Naive thymus-derived CD8-positive, alpha-beta T cell (primary cell): ENCODE measurements at regions of chrX and their contacts with region 1.

Region 1: GRCh38 chrX:54639346-54640102 is 109.5 kb downstream of the GNL3L start:
- DNase-seq: peak; percentile 79 to 97 (median 90)
- ATAC-seq: peak; percentile 89
- H3K4me3 Mint-ChIP-seq: peak overlapping the region; percentile 89 to 98 (median 96)
- H3K27ac Mint-ChIP-seq: peak overlapping the region; percentile 98 to 100 (median 99)
- H3K4me1 Mint-ChIP-seq: peaks cover 2 to 10% (median 9%) of the 10 kb centered on the region in 4 donors
- H3K27me3 Mint-ChIP-seq: no peaks in the 10 kb centered on the region

Region 2: GRCh38 chrX:54044126-54044876 is 595.2 kb before region 1 on chrX and contains the start of gene PHF8:
- POLR2A ChIA-PET with region 1: interaction called, 21 read pairs
- DNase-seq: peak; percentile 79 to 97 (median 94)
- ATAC-seq: peak; percentile 81 to 83
- H3K4me3 Mint-ChIP-seq: peak within 1 kb of the TSS; percentile 88 to 96 (median 92)
- H3K27ac Mint-ChIP-seq: peak within 1 kb of the TSS; percentile 93 to 99 (median 97)
- H3K4me1 Mint-ChIP-seq: peaks cover 4 to 21% (median 15%) of the 10 kb centered on the region in 4 donors
- H3K27me3 Mint-ChIP-seq: no peaks in the 10 kb centered on the region
- polyA plus RNA-seq, gene PHF8: 12.0 to 16.3 (median 13.1) TPM

Region 3: GRCh38 chrX:54182864-54183608 is 456.5 kb before region 1 on chrX and contains the start of gene FAM120C:
- POLR2A ChIA-PET with region 1: interaction called, 18 read pairs
- DNase-seq: peak; percentile 43 to 82 (median 58)
- ATAC-seq: peak; percentile 70 to 74
- H3K4me3 Mint-ChIP-seq: peak within 1 kb of the TSS; percentile 79 to 92 (median 87)
- H3K27ac Mint-ChIP-seq: peak within 1 kb of the TSS; percentile 77 to 95 (median 88)
- H3K4me1 Mint-ChIP-seq: peaks cover 22 to 43% (median 42%) of the 10 kb centered on the region in 4 donors
- H3K27me3 Mint-ChIP-seq: no peaks in the 10 kb centered on the region
- polyA plus RNA-seq, gene FAM120C: 6.9 to 8.1 (median 7.2) TPM

Region 4: GRCh38 chrX:54439967-54440871 is 199.3 kb before region 1 on chrX and contains the start of gene TSR2:
- POLR2A ChIA-PET with region 1: interaction called, 16 read pairs
- DNase-seq: peak; percentile 61 to 86 (median 74)
- ATAC-seq: peak; percentile 96 to 97
- H3K4me3 Mint-ChIP-seq: peak within 1 kb of the TSS; percentile 89 to 99 (median 92)
- H3K27ac Mint-ChIP-seq: peak within 1 kb of the TSS; percentile 89 to 95 (median 94)
- H3K4me1 Mint-ChIP-seq: peaks cover 16 to 46% (median 35%) of the 10 kb centered on the region in 4 donors
- H3K27me3 Mint-ChIP-seq: no peaks in the 10 kb centered on the region
- polyA plus RNA-seq, gene TSR2: 65.8 to 83.4 (median 66.4) TPM

Region 5: GRCh38 chrX:54529552-54530357 is 109.8 kb before region 1 on chrX and contains the start of gene GNL3L:
- POLR2A ChIA-PET with region 1: interaction called, 37 read pairs
- DNase-seq: peak; percentile 68 to 90 (median 76)
- ATAC-seq: peak; percentile 89 to 90
- H3K4me3 Mint-ChIP-seq: peak within 1 kb of the TSS; percentile 88 to 96 (median 94)
- H3K27ac Mint-ChIP-seq: peak within 1 kb of the TSS; percentile 90 to 98 (median 97)
- H3K4me1 Mint-ChIP-seq: peaks cover 14 to 41% (median 34%) of the 10 kb centered on the region in 4 donors
- H3K27me3 Mint-ChIP-seq: no peaks in the 10 kb centered on the region
- polyA plus RNA-seq, gene GNL3L: 22.5 to 43.1 (median 33.3) TPM

Region 6: DNA sequence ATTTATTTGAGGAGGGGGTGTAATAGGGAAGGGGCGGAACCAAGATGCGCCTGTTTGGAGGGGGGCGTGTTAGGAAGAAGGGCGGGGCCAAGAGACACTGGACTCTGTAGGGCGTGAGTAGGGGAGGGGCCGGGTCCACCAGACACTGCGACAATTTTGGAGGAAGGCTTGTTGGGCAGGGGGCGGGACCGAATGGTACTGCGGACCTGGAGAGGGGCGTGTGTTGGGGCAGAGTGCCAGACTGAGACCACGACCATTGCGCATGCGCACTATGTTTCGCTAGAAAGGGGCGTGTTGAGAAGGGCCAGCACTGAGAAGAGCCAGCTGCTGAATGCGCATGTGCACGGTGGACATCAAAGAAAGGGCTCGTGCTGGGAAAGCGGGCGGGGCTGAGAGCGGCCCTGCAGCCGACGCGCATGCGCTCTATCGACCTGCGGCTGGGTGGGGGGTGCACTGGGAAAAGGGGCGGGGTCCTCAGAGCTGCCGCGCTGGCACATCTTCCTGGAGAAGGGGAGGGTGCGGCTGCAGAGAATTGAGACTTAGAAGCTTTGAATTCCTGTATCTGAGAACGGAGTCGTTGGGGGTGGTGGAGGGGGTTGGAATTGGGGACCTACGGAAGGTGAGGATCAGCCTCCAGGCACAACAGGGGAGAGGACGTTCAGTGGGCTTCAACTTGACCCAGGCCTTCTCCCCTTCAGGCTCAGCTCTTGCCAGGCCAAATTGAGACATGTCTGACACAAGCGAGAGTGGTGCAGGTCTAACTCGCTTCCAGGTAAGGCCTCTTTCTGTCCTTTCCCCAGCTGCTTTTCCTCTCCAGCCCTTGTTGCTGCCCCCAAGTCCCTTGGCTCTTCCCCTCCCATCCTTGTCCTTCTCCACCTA is 169.3 kb after region 1 on chrX:
- POLR2A ChIA-PET with region 1: interaction called, 17 read pairs
- DNase-seq: peak; percentile 71 to 96 (median 88)
- ATAC-seq: peak; percentile 71 to 77
- H3K4me3 Mint-ChIP-seq: peak overlapping the region; percentile 91 to 99 (median 95)
- H3K27ac Mint-ChIP-seq: peak overlapping the region; percentile 90 to 99 (median 95)
- H3K4me1 Mint-ChIP-seq: peaks cover 13 to 27% (median 24%) of the 10 kb centered on the region in 4 donors
- H3K27me3 Mint-ChIP-seq: peaks cover 0 to 2% (median 0%) of the 10 kb centered on the region in 5 donors